Caco-2 (cell line): ENCODE measurements at regions of chr18 and their contacts with region 1.

Region 1: DNA sequence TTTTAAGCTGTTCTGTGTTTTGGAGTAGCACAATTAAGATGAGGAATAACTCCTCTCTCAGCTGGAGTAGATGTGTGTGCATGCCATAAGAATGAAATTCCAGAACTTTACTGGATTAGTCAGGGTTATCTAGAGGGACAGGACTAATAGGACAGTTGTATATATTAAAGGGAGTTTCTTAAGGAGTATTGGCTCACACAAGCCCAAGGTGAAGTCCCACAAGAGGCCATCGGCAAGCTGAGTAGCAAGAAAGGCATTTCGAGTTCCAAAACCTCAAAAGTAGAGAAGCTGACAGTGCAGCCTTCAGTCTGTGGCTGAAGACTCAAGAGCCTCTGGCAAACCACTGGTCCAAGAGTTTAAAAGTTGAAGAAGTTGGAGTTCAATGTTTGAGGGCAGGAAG is 113.7 kb downstream of the RIT2 start:
- DNase-seq: no peak
- H3K4me3 ChIP-seq: no peak overlapping the region
- H3K4me3 Mint-ChIP-seq: no peak overlapping the region
- H3K27ac Mint-ChIP-seq: no peak overlapping the region
- H3K4me1 ChIP-seq: no peaks in the 10 kb centered on the region
- H3K4me1 Mint-ChIP-seq: no peaks in the 10 kb centered on the region
- H3K27me3 ChIP-seq: no peaks in the 10 kb centered on the region
- H3K27me3 Mint-ChIP-seq: peaks cover 9% of the 10 kb centered on the region
- CTCF ChIP-seq: no peak

Region 2: DNA sequence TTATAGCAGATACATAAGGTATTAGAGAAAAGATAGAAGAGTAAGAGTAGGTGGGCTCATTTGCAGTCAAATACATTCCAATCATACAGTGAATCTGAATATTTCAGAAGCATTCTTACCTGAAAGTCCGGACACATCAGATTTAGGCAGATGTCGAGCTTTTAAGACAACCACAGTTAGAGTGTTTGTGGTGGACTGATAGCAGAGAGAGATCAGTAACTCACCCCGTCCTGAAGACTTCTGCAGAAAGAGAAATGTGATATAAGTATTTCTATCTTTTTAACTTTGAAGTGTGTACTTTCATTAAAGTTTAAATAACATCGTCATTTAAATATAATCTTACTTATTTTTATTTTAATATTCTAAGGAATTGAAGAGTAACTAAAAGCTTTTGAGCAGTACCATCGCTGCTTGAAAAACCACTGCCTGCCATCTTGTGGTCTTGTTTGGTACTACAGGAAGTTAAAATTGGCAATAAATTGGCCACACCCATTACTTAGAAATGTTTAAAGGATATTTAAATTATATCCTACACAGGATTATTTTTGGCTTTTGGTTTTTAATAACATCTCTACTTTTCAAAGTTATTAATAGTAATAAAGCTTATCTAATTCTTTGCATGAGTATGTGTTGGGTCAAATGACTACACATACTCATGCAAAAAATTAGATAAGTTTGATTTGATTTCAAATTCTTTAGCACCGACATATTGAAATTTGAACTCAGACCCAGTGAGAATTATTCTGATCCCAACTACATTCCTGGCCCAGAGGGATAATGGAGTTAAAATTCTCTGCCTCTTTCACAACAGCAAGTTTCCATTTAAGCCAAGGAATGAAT is 270.0 kb after region 1 on chr18:
- CTCF ChIA-PET with region 1: no interaction called
- POLR2A ChIA-PET with region 1: no interaction called
- intact Hi-C with region 1: loop called (anchors 10 kb)
- DNase-seq: peak in 1 of 2 experiments; percentile 28
- H3K4me3 ChIP-seq: no peak overlapping the region
- H3K4me3 Mint-ChIP-seq: no peak overlapping the region
- H3K27ac Mint-ChIP-seq: no peak overlapping the region
- H3K4me1 ChIP-seq: no peaks in the 10 kb centered on the region
- H3K4me1 Mint-ChIP-seq: no peaks in the 10 kb centered on the region
- H3K27me3 ChIP-seq: no peaks in the 10 kb centered on the region
- H3K27me3 Mint-ChIP-seq: peaks cover 3% of the 10 kb centered on the region
- CTCF ChIP-seq: peak; percentile 30 to 35